SK-N-SH (cell line): ENCODE measurements at regions of chr20 and their contacts with region 1.

Region 1: GRCh38 chr20:22339091-22339881 is 245.1 kb downstream of the FOXA2 start:
- DNase-seq: peak; percentile 38
- H3K4me3 ChIP-seq: peak overlapping the region in 1 of 2 experiments; percentile 41; a peak in 1 of 4 replicates
- H3K27ac ChIP-seq: no peak overlapping the region
- H3K4me1 ChIP-seq: no peaks in the 10 kb centered on the region
- H3K27me3 ChIP-seq: peaks cover 40% of the 10 kb centered on the region
- CTCF ChIP-seq: peak; percentile 88
- EP300 ChIP-seq: no peak
- RAD21 ChIP-seq: peak; percentile 82

Region 2: GRCh38 chr20:22352019-22352418 is 12.7 kb after region 1 on chr20:
- CTCF ChIA-PET with region 1: interaction called, 43 read pairs
- POLR2A ChIA-PET with region 1: no interaction called
- DNase-seq: no peak
- H3K4me3 ChIP-seq: no peak overlapping the region
- H3K27ac ChIP-seq: no peak overlapping the region
- H3K4me1 ChIP-seq: no peaks in the 10 kb centered on the region
- H3K27me3 ChIP-seq: peaks cover 23% of the 10 kb centered on the region; the same call in 1 of the 2 replicates
- CTCF ChIP-seq: no peak
- EP300 ChIP-seq: no peak
- RAD21 ChIP-seq: no peak

Region 3: DNA sequence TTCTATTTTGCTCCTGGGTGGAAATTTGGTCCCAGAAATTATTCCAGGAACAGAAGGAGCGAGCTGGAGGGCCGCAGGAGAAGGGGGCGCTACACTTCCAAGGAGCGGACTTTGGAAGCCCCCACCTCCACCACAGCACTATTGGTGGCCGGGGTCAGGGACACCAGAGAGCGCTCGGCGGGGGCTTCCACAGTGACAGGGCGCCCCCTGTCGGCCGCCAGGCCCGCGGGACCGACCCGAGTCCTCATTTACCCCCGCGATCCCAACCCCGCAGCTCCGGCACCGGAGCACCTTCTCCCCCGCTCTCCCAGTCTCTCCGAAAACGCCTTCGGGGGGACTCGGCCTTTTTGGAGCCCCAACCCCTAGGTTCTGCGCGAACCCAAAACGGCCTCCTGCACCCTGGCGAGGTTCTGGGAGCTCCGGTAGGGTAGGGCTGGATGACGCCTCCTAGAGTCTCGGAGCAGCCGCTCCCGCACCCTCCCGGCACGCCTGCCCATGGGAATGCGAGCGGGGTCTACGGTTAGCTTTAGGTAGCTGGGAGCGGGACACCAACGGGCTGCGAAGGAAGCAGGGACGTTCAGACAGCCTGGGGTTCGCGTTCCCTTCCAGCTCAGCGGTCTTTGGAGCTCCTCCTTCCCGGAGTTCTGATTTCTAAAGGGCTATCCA is 247.5 kb after region 1 on chr20:
- CTCF ChIA-PET with region 1: interaction called, 18 read pairs
- POLR2A ChIA-PET with region 1: no interaction called
- DNase-seq: peak; percentile 74
- H3K4me3 ChIP-seq: no peak overlapping the region; a peak in 1 of 4 replicates
- H3K27ac ChIP-seq: no peak overlapping the region
- H3K4me1 ChIP-seq: no peaks in the 10 kb centered on the region
- H3K27me3 ChIP-seq: peaks cover 69% of the 10 kb centered on the region
- CTCF ChIP-seq: peak; percentile 58
- EP300 ChIP-seq: no peak
- RAD21 ChIP-seq: peak; percentile 35

Region 4: GRCh38 chr20:22684072-22684762 is 344.9 kb after region 1 on chr20:
- CTCF ChIA-PET with region 1: interaction called, 51 read pairs
- POLR2A ChIA-PET with region 1: no interaction called
- DNase-seq: peak; percentile 58
- H3K4me3 ChIP-seq: no peak overlapping the region; a peak in 1 of 4 replicates
- H3K27ac ChIP-seq: no peak overlapping the region
- H3K4me1 ChIP-seq: no peaks in the 10 kb centered on the region
- H3K27me3 ChIP-seq: peaks cover 38% of the 10 kb centered on the region; the same call in 1 of the 2 replicates
- CTCF ChIP-seq: peak; percentile 83
- EP300 ChIP-seq: no peak
- RAD21 ChIP-seq: peak; percentile 83

Region 5: DNA sequence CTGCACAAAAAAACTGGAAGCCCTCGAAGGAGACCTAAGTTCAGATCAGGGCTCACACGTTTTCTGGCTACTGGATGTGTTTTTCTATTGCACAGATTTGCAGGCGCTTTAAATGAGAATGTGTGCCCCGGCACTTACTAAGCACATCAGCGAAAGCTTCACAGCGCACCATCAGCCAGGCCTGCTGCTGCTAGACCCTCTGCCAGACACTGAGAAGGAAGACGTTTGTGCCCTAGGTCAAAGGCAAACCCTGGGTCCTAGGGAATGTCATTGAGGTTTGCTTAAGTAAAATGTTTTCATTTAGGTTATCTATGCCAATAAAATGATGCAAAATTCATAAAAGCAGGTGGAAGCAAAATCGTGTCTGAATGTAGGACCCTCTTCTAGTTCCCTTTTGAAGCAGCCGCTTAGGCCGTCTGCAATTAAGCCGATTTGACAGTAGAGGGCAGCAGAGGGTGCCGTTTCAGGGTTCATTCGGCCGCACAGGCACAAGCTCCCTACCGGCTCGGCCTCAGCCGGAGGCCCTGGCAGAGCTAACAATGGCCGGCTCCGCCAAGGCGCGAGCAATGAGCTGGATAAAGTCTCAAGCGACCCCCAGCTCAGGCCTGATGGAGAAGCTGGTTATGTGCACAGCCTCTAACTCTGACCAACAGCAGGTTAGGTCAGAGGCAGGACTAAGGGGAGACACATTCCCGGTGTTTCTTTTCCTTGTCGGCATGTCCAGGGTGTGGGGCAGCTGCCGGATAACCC is 352.3 kb after region 1 on chr20:
- CTCF ChIA-PET with region 1: interaction called, 12 read pairs
- POLR2A ChIA-PET with region 1: no interaction called
- DNase-seq: peak; percentile 72
- H3K4me3 ChIP-seq: no peak overlapping the region; a peak in 1 of 4 replicates
- H3K27ac ChIP-seq: no peak overlapping the region
- H3K4me1 ChIP-seq: peaks cover 0 to 3% of the 10 kb centered on the region in 2 experiments; a peak in 1 of 4 replicates
- H3K27me3 ChIP-seq: peaks cover 8% of the 10 kb centered on the region; the same call in 1 of the 2 replicates
- CTCF ChIP-seq: peak; percentile 88
- EP300 ChIP-seq: no peak
- RAD21 ChIP-seq: peak; percentile 80

Region 6: GRCh38 chr20:23340524-23340923 is 1001.2 kb after region 1 on chr20:
- CTCF ChIA-PET with region 1: interaction called, 17 read pairs
- POLR2A ChIA-PET with region 1: no interaction called
- DNase-seq: peak; percentile 67
- H3K4me3 ChIP-seq: no peak overlapping the region
- H3K27ac ChIP-seq: no peak overlapping the region
- H3K4me1 ChIP-seq: no peaks in the 10 kb centered on the region; a peak in 1 of 4 replicates
- H3K27me3 ChIP-seq: peaks cover 31% of the 10 kb centered on the region; the same call in 1 of the 2 replicates
- CTCF ChIP-seq: peak; percentile 76
- EP300 ChIP-seq: no peak
- RAD21 ChIP-seq: peak; percentile 89